ENCODE measurements at regions of chrX and their contacts with region 1.

Region 1: GRCh38 chrX:14697451-14697850 is 168.1 kb downstream of the GLRA2 start:
- DNase-seq: no peak
- ATAC-seq: peak; percentile 96
- H3K4me3 ChIP-seq: no peak overlapping the region
- H3K27ac ChIP-seq: no peak overlapping the region
- H3K4me1 ChIP-seq: no peaks in the 10 kb centered on the region
- H3K27me3 ChIP-seq: no peaks in the 10 kb centered on the region
- CTCF ChIP-seq: peak; percentile 53 to 66 (median 64)
- EP300 ChIP-seq: no peak
- POLR2A ChIP-seq: no peak
- RAD21 ChIP-seq: peak; percentile 62

Region 2: GRCh38 chrX:14095702-14096101 is 601.7 kb before region 1 on chrX:
- CTCF ChIA-PET with region 1: interaction called, 3 read pairs
- POLR2A ChIA-PET with region 1: no interaction called
- RAD21 ChIA-PET with region 1: no interaction called
- SMC1A ChIA-PET with region 1: no interaction called
- in situ Hi-C with region 1: no loop called
- intact Hi-C with region 1: loop called (anchors 10 kb)
- DNase-seq: peak; percentile 4
- ATAC-seq: peak; percentile 97
- H3K4me3 ChIP-seq: no peak overlapping the region
- H3K27ac ChIP-seq: no peak overlapping the region
- H3K4me1 ChIP-seq: no peaks in the 10 kb centered on the region
- H3K27me3 ChIP-seq: no peaks in the 10 kb centered on the region; a peak in 1 of 4 replicates
- CTCF ChIP-seq: peak; percentile 72 to 80 (median 76)
- EP300 ChIP-seq: no peak
- POLR2A ChIP-seq: no peak
- RAD21 ChIP-seq: peak; percentile 77

Region 3: GRCh38 chrX:14497184-14497666 is 200.2 kb before region 1 on chrX:
- CTCF ChIA-PET with region 1: no interaction called
- POLR2A ChIA-PET with region 1: no interaction called
- RAD21 ChIA-PET with region 1: no interaction called
- SMC1A ChIA-PET with region 1: no interaction called
- in situ Hi-C with region 1: no loop called
- intact Hi-C with region 1: no loop called
- DNase-seq: peak; percentile 12
- ATAC-seq: peak; percentile 90
- H3K4me3 ChIP-seq: peak overlapping the region; percentile 20; the same call in 1 of the 2 replicates
- H3K27ac ChIP-seq: peak overlapping the region; percentile 32
- H3K4me1 ChIP-seq: no peaks in the 10 kb centered on the region
- H3K27me3 ChIP-seq: no peaks in the 10 kb centered on the region
- CTCF ChIP-seq: no peak
- EP300 ChIP-seq: no peak
- POLR2A ChIP-seq: no peak
- RAD21 ChIP-seq: no peak